ENCODE measurements at regions of chr1 and their contacts with region 1.

Region 1: DNA sequence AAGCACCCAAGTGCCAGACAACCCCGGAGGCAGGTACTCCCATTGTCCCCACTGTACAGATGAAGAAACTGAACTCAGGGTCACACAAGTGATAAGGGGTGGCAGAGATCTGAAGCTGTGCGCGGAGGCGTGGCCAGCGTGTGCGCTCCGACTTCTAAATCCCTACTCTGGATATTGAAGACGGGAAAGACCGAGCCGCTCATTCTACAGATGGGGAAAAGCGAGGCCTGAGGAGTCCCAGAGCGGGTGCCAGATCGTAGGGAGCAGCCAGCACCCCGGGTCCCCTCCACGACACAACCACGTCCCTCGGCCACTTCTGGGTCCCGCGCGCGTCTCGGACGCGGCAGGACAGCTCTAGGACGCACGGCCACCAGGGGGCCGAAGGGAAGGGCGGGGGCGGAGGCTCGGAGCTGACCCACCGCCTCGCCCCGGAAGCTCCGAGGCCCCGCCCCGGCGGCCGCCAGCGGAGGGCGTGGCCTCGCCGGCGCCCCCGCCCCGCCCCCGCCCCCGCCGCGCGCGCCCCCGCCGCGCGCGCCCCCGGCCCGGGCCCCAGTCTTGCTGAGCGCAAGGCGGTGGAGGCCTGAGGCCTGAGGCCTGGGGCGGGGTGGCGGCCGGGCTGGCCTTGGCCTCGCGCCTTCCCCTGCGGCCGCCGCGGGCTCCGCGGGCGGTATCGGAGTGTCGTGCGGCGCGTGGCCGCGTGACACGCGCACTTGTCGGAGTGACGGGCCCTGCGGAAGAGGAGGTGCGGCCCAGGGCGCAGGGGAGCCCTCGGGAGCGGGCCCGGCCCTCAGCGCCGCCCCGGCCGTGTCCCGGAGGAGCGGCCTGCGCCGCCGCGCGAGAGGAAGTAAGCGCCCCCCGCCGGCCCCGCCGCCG is at the start of gene H6PD:
- DNase-seq: peak; percentile 81
- ATAC-seq: peak; percentile 89
- H3K4me3 Mint-ChIP-seq: peak within 1 kb of the TSS; percentile 87
- H3K27ac Mint-ChIP-seq: peak within 1 kb of the TSS; percentile 94
- H3K4me1 Mint-ChIP-seq: peaks cover 31% of the 10 kb centered on the region
- H3K27me3 Mint-ChIP-seq: peaks cover 2% of the 10 kb centered on the region
- total RNA-seq, gene H6PD: 9.7 to 10.2 TPM

Region 2: DNA sequence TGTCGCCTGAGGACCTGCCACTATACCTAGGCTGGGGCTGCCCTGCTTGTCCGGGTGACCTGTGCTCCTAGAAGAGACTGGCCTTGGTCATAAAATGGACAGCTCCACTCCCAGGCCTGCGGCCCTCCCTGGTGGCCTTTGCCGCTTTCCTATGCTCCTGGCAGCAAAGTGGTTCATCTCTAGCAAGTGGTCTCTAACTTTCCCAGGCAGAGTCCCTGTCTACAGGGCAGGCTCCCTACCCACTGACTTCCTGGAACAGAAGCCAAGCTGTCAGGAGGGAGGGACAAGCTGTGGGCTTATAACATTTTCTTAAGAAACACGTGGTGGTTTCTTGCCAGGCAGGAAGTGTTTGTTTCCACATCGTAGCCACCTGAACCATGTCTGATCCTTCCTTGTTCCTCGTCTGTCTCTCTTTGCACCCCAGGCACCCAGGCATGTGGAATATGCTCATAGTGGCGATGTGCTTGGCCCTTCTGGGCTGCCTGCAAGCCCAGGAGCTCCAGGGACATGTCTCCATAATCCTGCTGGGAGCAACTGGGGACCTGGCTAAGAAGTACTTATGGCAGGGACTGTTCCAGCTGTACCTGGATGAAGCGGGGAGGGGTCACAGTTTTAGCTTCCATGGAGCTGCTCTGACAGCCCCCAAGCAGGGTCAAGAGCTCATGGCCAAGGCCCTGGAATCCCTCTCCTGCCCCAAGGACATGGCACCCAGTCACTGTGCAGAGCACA is 10.2 kb after region 1 on chr1:
- CTCF ChIA-PET with region 1: interaction called, 18 read pairs
- POLR2A ChIA-PET with region 1: interaction called, 17 read pairs
- DNase-seq: peak; percentile 42
- ATAC-seq: peak; percentile 34
- H3K4me3 Mint-ChIP-seq: peak overlapping the region; percentile 32
- H3K27ac Mint-ChIP-seq: peak overlapping the region; percentile 26
- H3K4me1 Mint-ChIP-seq: peaks cover 50% of the 10 kb centered on the region
- H3K27me3 Mint-ChIP-seq: no peaks in the 10 kb centered on the region

Region 3: DNA sequence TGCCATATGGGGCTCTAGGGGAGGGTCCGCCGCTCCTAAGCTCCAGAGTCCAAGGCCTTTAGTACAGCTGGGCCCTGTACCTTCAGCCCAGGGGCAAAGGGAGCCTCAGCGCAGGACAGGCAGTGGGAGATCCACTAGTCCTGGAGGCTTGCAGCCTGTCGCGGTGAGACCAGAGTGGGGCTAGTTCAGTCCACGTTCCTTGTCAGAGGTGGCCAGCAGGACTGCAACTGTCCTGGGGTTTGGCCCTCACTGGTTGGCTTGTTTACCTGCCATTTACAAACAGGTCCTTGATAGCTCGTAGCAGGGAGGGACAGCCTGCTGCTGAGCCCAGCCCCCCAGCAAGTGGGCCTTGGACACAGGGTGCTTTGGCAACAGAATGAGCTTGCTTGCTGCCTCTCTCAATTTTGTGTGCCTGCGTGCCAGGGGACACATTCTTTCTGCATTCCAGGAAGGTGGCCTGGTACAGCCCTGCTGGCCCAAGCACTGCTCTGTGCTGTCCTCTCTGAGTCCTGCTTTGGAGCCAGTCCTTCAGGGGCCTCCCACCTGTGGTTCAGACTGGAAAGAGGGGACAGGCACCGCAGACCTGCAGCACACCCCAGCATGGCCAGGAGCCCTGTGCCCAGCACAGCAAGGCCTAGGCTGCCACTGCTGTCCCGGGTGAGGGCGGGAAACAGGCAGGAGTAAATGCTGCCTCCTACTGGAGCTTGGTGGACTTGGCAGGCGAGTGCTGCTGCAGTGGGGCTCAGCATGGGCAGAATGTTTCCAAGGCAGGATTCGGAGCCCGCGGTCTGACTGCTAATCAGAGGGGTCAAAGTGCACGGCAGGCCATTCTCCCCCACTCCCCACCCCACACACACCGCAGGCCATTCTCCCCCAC is 15.3 kb after region 1 on chr1:
- CTCF ChIA-PET with region 1: interaction called, 18 read pairs
- POLR2A ChIA-PET with region 1: interaction called, 17 read pairs
- DNase-seq: peak; percentile 57
- ATAC-seq: peak; percentile 54
- H3K4me3 Mint-ChIP-seq: no peak overlapping the region
- H3K27ac Mint-ChIP-seq: no peak overlapping the region
- H3K4me1 Mint-ChIP-seq: peaks cover 16% of the 10 kb centered on the region
- H3K27me3 Mint-ChIP-seq: no peaks in the 10 kb centered on the region

Region 4: GRCh38 chr1:9331558-9332346 is 97.3 kb after region 1 on chr1:
- CTCF ChIA-PET with region 1: no interaction called
- POLR2A ChIA-PET with region 1: no interaction called
- DNase-seq: no peak
- ATAC-seq: no peak
- H3K4me3 Mint-ChIP-seq: no peak overlapping the region
- H3K27ac Mint-ChIP-seq: no peak overlapping the region
- H3K4me1 Mint-ChIP-seq: peaks cover 9% of the 10 kb centered on the region
- H3K27me3 Mint-ChIP-seq: no peaks in the 10 kb centered on the region